ENCODE measurements at regions of chr11 and their contacts with region 1.

Region 1: GRCh38 chr11:58567889-58568512 is 7.7 kb downstream of the LPXN start:
- DNase-seq: peak; percentile 68 to 73
- H3K4me3 ChIP-seq: no peak overlapping the region
- H3K4me3 Mint-ChIP-seq: no peak overlapping the region
- H3K27ac Mint-ChIP-seq: no peak overlapping the region
- H3K4me1 ChIP-seq: no peaks in the 10 kb centered on the region
- H3K4me1 Mint-ChIP-seq: no peaks in the 10 kb centered on the region
- H3K27me3 ChIP-seq: no peaks in the 10 kb centered on the region
- H3K27me3 Mint-ChIP-seq: no peaks in the 10 kb centered on the region
- CTCF ChIP-seq: peak; percentile 86 to 95

Region 2: GRCh38 chr11:58629857-58630256 is 61.9 kb after region 1 on chr11:
- CTCF ChIA-PET with region 1: interaction called, 12 read pairs
- POLR2A ChIA-PET with region 1: no interaction called
- intact Hi-C with region 1: no loop called
- DNase-seq: peak in 1 of 2 experiments; percentile 43
- H3K4me3 ChIP-seq: no peak overlapping the region
- H3K4me3 Mint-ChIP-seq: no peak overlapping the region
- H3K27ac Mint-ChIP-seq: no peak overlapping the region
- H3K4me1 ChIP-seq: no peaks in the 10 kb centered on the region
- H3K4me1 Mint-ChIP-seq: no peaks in the 10 kb centered on the region
- H3K27me3 ChIP-seq: no peaks in the 10 kb centered on the region
- H3K27me3 Mint-ChIP-seq: no peaks in the 10 kb centered on the region
- CTCF ChIP-seq: peak; percentile 37 to 59